CD4-positive, alpha-beta T cell (primary cell): ENCODE measurements at regions of chr9 and their contacts with region 1.

Region 1: GRCh38 chr9:112029921-112030444 is 133.4 kb downstream of the UGCG start:
- DNase-seq: peak in 3 of 14 experiments; percentile 8 to 37 (median 26)
- ATAC-seq: no peak
- H3K4me3 ChIP-seq: no peak overlapping the region
- H3K4me3 Mint-ChIP-seq: no peak overlapping the region
- H3K27ac ChIP-seq: no peak overlapping the region
- H3K27ac Mint-ChIP-seq: no peak overlapping the region
- H3K4me1 ChIP-seq: peaks cover 32% of the 10 kb centered on the region
- H3K4me1 Mint-ChIP-seq: peaks cover 62% of the 10 kb centered on the region
- H3K27me3 ChIP-seq: no peaks in the 10 kb centered on the region
- H3K27me3 Mint-ChIP-seq: peaks cover 3% of the 10 kb centered on the region
- CTCF ChIP-seq: no peak

Region 2: DNA sequence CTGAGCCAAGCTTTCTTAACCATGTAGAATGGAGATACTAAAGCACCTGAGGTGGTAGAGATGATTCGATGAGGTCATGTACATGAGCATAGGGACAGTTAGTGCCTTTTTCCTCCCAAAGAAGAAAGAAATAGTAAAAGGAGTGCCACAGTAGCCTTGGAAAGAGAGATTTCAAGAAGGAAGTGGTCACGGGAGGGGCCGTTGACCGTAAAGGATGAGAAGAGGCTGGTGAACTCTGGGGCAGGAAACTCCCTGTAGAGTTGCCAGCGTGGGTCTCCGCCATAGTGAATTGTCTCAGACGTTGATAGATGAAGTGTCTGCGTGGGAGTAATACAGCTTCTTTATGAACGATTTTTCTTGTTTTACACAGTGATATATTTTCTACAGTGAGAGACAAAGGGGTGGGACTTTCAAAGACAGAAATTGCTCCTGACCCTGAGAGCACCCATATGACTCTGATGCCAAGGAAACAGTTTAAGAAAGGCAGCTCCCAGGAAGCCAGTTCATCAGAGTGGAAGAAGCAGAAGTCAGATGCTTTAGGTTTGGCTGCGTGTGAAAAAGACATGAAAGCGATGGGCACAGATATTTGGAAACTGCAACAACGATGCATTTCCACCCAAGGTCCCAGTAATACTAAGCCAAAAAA is 92.1 kb before region 1 on chr9:
- CTCF ChIA-PET with region 1: no interaction called
- POLR2A ChIA-PET with region 1: interaction called, 6 read pairs
- intact Hi-C with region 1: loop called in 1 of 2 experiments (anchors 5 kb)
- DNase-seq: peak; percentile 20 to 84 (median 43)
- ATAC-seq: peak; percentile 94
- H3K4me3 ChIP-seq: peak overlapping the region; percentile 39
- H3K4me3 Mint-ChIP-seq: peak overlapping the region; percentile 53
- H3K27ac ChIP-seq: peak overlapping the region; percentile 34 to 64
- H3K27ac Mint-ChIP-seq: peak overlapping the region; percentile 87
- H3K4me1 ChIP-seq: peaks cover 20% of the 10 kb centered on the region
- H3K4me1 Mint-ChIP-seq: peaks cover 40% of the 10 kb centered on the region
- H3K27me3 ChIP-seq: no peaks in the 10 kb centered on the region
- H3K27me3 Mint-ChIP-seq: no peaks in the 10 kb centered on the region
- CTCF ChIP-seq: no peak

Region 3: DNA sequence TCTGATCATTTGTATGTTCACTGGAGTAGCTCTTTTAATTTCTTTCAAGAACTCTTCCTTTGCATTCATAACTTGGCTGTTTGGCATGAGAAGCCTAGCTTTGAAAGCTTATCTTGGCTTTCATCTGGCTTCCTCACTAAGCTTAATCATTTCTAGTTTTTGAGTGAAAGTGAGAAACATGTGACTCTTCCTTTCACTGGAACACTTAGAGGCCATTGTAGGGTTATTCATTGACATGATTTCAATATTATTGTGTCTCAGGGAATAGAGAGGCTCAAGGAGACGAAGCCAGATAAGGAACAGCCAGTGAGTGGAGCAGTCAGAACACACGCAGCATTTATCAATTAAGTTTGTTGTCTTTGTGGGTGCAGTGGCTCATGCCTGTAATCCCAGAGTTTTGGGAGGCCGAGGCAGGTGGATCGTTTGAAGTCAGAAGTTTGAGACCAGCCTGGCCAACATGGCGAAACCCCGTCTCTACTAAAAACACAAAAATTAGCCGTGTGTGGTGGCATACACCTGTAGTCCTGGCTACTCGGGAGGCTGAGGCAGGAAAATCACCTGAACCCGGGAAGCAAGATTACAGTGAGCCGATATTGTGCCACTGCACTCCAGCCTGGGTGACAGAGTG is 35.0 kb before region 1 on chr9:
- CTCF ChIA-PET with region 1: no interaction called
- POLR2A ChIA-PET with region 1: no interaction called
- intact Hi-C with region 1: loop called in 1 of 2 experiments (anchors 5 kb)
- DNase-seq: no peak
- ATAC-seq: no peak
- H3K4me3 ChIP-seq: no peak overlapping the region
- H3K4me3 Mint-ChIP-seq: no peak overlapping the region
- H3K27ac ChIP-seq: no peak overlapping the region
- H3K27ac Mint-ChIP-seq: no peak overlapping the region
- H3K4me1 ChIP-seq: peaks cover 13% of the 10 kb centered on the region
- H3K4me1 Mint-ChIP-seq: peaks cover 27% of the 10 kb centered on the region
- H3K27me3 ChIP-seq: no peaks in the 10 kb centered on the region
- H3K27me3 Mint-ChIP-seq: no peaks in the 10 kb centered on the region
- CTCF ChIP-seq: no peak

Region 4: DNA sequence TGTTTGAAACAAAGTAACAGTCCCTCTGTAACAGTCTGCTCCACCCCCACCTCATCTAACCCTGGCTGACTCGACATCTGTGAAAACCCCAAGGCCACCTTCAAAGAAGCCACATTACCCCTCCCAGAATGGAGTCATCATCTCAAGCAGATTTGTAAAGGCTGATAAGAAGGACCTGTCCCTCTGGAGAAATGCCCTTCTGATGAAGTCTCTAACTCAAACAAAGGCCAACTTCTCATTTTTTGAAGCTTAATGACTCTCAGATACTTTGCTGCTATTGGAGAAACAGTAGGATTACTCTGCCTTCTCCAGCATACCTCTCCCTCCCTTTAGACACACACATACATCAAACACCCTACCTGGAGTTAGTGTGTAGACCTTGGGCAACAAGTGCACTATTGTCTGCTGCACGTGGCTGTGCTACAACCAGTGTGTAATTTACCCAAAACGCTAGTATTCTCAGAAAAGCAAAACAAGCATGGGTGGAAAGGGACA is 150.5 kb after region 1 on chr9:
- CTCF ChIA-PET with region 1: no interaction called
- POLR2A ChIA-PET with region 1: no interaction called
- intact Hi-C with region 1: no loop called
- DNase-seq: peak in 9 of 14 experiments; percentile 10 to 86 (median 32)
- ATAC-seq: peak; percentile 31
- H3K4me3 ChIP-seq: no peak overlapping the region
- H3K4me3 Mint-ChIP-seq: peak overlapping the region; percentile 18
- H3K27ac ChIP-seq: peak overlapping the region; percentile 0 to 26
- H3K27ac Mint-ChIP-seq: peak overlapping the region; percentile 60
- H3K4me1 ChIP-seq: peaks cover 48% of the 10 kb centered on the region
- H3K4me1 Mint-ChIP-seq: peaks cover 60% of the 10 kb centered on the region
- H3K27me3 ChIP-seq: no peaks in the 10 kb centered on the region
- H3K27me3 Mint-ChIP-seq: no peaks in the 10 kb centered on the region
- CTCF ChIP-seq: no peak